ENCODE measurements at regions of chr10 and their contacts with region 1.

Region 1: GRCh38 chr10:103870516-103870915 is 15.1 kb upstream of the SH3PXD2A start:
- DNase-seq: peak; percentile 30 to 58
- ATAC-seq: peak in 1 of 4 donors; percentile 36
- H3K4me3 ChIP-seq: no peak overlapping the region
- H3K27ac ChIP-seq: no peak overlapping the region
- H3K4me1 ChIP-seq: no peaks in the 10 kb centered on the region
- H3K27me3 ChIP-seq: no peaks in the 10 kb centered on the region
- CTCF ChIP-seq: no peak

Region 2: GRCh38 chr10:103592186-103593021 is 278.1 kb before region 1 on chr10:
- intact Hi-C with region 1: loop called in 1 of 2 experiments (anchors 10 kb)
- DNase-seq: peak; percentile 51 to 69
- ATAC-seq: peak; percentile 69 to 85 (median 80)
- H3K4me3 ChIP-seq: no peak overlapping the region
- H3K27ac ChIP-seq: no peak overlapping the region
- H3K4me1 ChIP-seq: no peaks in the 10 kb centered on the region
- H3K27me3 ChIP-seq: no peaks in the 10 kb centered on the region
- CTCF ChIP-seq: peak; percentile 62

Measured in psoas muscle (tissue), 8 donors.